Right ventricle myocardium superior (tissue), 1 donor: ENCODE measurements at regions of chr11 and their contacts with region 1.

Region 1: DNA sequence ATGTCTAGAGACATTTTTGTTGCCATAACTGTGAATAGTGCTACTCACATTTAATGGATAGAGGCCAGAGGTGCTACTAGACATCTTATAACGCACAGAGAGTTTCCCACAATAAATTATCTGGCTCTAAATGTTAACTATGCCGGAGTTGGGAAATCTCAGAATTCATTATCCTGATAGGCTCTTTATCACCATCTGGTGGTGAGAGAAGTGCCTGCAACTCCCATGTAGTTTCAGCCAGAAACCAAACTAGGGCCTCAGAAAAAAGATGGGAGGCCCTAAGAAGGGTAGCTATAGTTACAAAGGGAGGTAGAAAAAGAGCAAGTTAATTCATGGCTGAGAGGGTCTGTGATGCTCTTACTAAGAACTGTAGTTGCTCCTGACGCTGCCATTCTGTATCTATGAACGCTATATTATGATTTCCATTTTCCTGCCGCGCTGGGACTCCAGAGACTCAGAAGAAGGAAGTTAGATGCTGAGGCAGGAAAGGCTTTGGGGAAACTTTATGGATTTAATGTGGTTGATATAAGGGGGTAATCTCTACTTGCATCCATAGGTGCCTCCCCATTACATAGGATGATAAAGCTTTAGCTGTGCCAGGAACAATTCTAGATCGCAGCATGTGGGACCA is 22.9 kb upstream of the MRPL17 start:
- DNase-seq: no peak
- ATAC-seq: peak; percentile 66

Region 2: DNA sequence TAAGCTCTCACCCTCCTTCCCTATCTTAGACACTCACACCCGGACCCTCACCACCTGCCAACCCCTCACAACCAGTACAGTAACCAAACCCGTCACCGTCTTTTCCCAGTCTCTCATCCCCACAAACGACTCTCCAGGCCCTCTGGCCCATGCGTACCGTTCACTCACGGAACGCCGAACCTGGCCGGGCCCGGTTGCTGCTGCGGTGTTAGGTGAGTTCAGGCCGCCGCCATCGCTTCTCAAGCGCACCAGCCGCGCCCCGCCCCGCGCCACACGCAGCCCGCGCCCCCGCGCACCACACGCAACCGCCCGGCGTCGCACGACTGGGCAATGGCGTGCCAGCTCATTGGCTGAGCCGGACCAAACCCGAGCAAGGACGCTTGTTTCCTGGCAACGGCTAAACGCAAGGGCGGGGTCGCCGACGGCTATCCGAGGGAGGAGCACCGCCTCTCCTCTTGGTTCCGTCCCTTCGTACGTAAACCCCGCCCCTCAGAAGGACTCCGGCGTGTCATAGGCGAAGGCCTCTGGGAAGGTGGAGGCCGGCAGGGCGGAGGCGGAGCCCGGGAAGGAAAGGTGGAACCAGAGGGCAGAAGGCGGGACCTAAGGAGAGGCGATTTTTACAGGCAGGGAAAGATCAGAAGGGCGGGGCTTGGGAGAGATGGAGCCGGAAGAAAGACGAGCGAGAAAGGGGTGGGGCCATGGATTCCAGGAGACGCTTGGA is 471.5 kb before region 1 on chr11 and contains the start of gene FHIP1B:
- intact Hi-C with region 1: no loop called
- DNase-seq: peak; percentile 100
- ATAC-seq: peak; percentile 97
- total RNA-seq, gene FHIP1B: 12.9 TPM

Region 3: DNA sequence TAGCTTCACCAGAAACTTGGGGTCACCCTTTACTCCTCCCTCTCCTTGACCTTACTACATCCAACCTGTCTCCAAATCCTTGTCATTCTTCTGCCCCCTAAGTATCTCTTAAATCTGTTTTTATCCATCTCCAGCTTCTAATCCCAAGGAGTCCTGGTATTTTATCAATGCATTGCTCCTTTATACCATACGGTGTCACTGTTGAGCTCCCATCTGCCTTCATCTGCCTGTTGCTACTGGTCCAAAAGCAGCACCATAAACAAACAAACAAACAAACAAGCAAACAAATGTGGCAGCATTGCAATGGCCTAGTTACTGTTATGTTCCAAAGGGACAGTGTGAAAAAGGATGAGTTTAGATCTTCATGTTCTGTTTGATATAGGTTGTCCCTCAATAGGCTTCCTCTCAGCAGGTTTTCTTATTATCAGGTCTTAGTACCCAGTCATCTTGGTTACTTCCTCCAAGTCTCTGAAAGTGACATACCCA is 174.7 kb before region 1 on chr11:
- intact Hi-C with region 1: loop called (anchors 5 kb)
- DNase-seq: no peak
- ATAC-seq: peak; percentile 90

Region 4: DNA sequence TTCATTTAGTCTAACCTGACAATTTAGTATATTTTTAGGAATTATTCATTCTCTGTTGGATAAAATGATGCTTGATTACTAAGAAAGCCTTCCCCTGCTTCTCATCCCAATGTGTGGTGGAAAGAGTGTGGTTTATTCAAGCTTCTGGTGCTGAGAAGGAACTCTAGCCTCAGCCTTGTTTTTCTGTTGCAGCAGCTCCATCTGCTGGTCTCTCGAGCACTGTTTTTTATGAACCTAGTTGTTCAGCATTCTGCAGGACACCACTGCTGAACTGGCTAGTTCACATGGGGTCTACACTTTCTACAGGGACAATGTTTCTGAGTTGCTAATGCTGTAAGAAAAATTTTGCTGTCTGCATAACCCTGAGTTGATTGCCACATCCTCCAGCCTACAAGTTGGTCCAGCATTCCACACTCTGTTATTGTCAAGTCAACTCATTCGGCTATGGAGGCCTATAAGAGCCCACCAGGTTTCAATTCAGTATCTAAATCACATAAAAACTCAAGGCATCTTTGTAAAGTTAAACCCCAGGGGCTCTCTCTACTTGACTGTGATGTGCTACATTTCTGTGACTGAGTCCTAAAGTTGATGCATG is 51.5 kb after region 1 on chr11:
- intact Hi-C with region 1: loop called (anchors 10 kb)
- DNase-seq: no peak
- ATAC-seq: peak; percentile 71